Activated CD8-positive, alpha-beta T cell treated with anti-CD3 and anti-CD28 coated beads for 36 hours (primary cell): ENCODE measurements at regions of chr1 and their contacts with region 1.

Region 1: DNA sequence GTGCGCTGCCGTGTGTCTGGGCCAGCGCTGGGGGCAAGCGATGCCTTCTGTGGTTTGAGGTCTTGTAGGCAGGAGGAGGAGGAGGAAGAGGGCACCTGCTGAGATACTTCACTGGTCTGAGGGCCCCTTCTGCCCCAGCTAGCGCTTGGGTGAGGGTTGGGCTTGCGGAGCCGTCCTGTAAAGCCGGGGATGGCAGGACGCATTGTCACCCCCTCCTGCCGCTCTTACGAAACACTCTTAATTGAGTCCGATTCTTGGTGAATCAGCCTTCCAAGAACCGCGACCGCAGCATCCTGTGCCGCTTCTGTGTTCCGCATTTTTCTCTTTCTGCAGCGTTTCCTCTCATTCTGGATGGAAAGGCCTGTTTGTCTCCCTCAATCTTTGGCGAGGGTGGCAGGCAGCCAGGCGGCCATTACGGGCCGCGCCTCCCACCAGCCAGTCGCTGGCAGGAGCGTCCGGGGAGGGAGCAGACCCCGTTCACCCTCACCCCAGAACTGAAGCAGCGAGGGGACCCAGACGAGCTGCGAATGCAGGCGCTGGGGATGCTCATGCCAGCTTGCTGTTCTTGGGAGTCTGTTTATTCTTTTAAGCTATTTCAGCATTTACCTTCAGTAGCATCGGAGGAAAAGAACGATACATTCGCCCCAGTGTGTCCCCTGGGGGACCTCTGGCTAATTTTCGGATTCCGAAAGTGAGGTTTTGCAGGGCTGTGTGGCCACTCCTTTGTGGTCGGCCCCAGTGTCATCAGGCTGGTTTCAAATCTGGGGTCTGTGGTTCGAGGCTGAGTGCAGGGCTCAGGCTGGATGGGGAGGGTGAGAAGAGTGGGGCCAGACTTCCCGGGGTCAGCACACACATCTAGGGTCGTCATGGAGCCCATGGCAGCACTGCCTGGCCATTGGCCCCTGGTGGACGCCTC is 62.7 kb downstream of the SKI start:
- DNase-seq: peak; percentile 98
- ATAC-seq: peak; percentile 92
- H3K4me3 Mint-ChIP-seq: peak overlapping the region; percentile 76
- H3K27ac Mint-ChIP-seq: peak overlapping the region; percentile 95
- H3K4me1 Mint-ChIP-seq: peaks cover 78% of the 10 kb centered on the region
- H3K27me3 Mint-ChIP-seq: no peaks in the 10 kb centered on the region
- CTCF ChIP-seq: no peak

Region 2: DNA sequence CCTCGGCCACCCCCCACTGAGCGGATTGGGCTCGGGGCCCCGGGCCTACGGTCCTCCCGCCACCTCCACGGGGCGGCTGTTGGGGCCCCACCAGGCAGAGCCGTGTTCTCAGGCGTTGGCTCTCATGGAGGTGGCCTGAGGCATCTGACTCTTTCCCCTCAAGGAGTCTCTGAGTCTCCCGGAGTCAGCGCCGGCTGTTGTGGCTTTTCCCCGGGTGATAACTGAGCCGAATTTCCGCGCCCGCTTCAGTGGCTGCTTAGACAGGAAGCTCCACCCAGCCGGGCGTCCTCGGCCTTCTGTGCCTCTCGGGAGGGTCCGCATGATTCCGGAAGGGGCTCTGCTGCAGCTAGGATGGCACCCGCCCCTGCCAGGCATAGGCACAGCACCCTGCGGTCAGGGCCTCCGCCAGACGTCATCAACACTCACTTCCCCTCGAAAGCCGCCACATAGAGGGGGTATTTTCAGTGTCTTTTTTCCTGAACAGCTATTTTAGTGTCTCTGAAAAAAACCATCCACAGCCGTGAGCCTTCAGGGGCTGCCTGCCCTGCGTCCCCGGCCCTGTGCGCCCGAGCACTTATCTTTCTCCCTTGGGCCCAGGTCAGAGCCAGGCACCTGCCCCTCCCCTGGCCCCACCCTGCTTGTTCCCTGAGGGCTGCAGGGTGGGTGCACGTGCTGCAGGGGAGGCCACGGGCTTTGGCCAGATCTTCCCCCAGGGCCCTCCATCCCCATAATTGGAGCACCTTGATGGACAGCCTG is 10.2 kb after region 1 on chr1:
- CTCF ChIA-PET with region 1: interaction called, 15 read pairs
- POLR2A ChIA-PET with region 1: interaction called, 23 read pairs
- intact Hi-C with region 1: loop called (anchors 1 kb)
- DNase-seq: peak; percentile 98
- ATAC-seq: peak; percentile 83
- H3K4me3 Mint-ChIP-seq: peak overlapping the region; percentile 81
- H3K27ac Mint-ChIP-seq: peak overlapping the region; percentile 99
- H3K4me1 Mint-ChIP-seq: peaks cover 55% of the 10 kb centered on the region
- H3K27me3 Mint-ChIP-seq: no peaks in the 10 kb centered on the region
- CTCF ChIP-seq: no peak